Heart left ventricle (tissue), 16 donors: ENCODE measurements at regions of chr5 and their contacts with region 1.

Region 1: DNA sequence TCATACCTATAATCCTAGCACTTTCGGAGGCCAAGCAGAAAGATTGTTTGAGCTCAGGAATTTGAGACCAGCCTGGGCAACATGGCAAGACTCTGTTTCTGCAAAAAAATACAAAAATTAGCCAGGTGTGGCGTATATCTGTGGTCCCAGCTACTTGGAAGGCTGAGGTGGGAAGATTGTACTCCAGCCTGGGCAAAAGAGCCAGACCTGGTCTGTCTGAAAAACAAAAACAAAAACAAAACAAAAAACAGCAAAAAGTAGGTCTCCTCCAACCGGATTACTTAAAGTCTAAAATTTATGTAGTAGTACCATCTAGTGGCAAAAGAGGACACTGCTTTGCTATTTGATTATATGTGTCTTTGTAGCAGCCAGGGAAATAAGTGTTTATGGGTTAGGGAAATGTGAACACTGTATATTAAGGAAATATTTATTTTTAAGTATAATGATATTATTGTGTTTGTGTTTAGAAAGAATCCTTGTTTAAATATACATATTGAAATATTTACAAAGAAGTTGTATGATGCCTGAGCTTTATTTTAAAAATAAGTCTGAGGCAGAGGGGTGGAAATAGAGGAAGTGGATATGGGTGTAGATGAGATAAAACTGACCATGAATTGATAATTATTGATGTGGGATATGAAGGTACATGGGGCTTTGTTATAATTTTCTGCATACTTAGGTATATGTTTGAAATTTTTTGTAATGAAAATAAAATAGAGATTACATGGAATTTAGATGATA is 20.0 kb downstream of the APC start:
- DNase-seq: no peak
- ATAC-seq: peak; percentile 55 to 85 (median 78)
- H3K4me3 ChIP-seq: peak overlapping the region in 2 of 12 donors; percentile 20 to 23
- H3K27ac ChIP-seq: peak overlapping the region in 3 of 12 donors; percentile 14 to 30 (median 30)
- H3K4me1 ChIP-seq: peaks cover 0 to 17% (median 6%) of the 10 kb centered on the region in 12 donors
- H3K27me3 ChIP-seq: no peaks in the 10 kb centered on the region
- CTCF ChIP-seq: peak; percentile 56 to 90 (median 82)
- POLR2A ChIP-seq: no peak

Region 2: DNA sequence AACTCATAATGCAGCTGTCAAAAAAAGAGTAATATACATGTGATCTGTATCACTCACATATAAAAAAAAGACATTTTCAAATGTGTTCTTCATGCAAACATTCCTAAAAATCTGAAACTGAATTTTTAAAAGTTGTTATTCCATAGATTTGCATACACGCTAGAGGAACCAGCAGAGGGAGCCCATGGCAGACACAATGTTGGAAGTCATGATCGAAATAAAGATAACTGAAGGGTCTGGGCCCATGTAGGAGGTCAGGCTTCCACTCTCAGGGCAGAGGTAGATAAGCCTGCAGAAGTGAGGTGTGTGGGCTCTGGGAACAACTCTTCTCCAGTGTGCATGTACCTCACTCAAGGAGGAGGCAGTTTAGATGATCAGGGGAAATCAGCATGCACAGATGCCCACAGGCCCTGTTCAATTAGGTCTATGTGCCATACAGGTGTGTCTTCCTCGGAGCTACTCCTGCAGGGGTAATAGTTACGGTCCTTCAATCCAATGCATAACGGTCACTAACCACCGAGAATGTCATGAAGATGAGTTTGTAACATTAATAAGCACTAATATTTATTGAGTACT is 547.1 kb before region 1 on chr5:
- intact Hi-C with region 1: loop called in 1 of 10 experiments (anchors 10 kb)
- DNase-seq: peak in 4 of 5 donors; percentile 14 to 51 (median 26)
- ATAC-seq: peak in 3 of 4 donors; percentile 48 to 70 (median 68)
- H3K4me3 ChIP-seq: no peak overlapping the region
- H3K27ac ChIP-seq: no peak overlapping the region
- H3K4me1 ChIP-seq: peaks cover 0 to 8% (median 0%) of the 10 kb centered on the region in 12 donors
- H3K27me3 ChIP-seq: no peaks in the 10 kb centered on the region
- CTCF ChIP-seq: peak; percentile 35 to 74 (median 66)
- POLR2A ChIP-seq: no peak

Region 3: GRCh38 chr5:112492291-112492690 is 265.3 kb before region 1 on chr5:
- intact Hi-C with region 1: loop called in 1 of 10 experiments (anchors 5 kb)
- DNase-seq: peak in 3 of 5 donors; percentile 47 to 63 (median 60)
- ATAC-seq: peak in 2 of 4 donors; percentile 87 to 90
- H3K4me3 ChIP-seq: no peak overlapping the region
- H3K27ac ChIP-seq: no peak overlapping the region
- H3K4me1 ChIP-seq: no peaks in the 10 kb centered on the region
- H3K27me3 ChIP-seq: no peaks in the 10 kb centered on the region
- CTCF ChIP-seq: peak; percentile 15 to 79 (median 54)
- POLR2A ChIP-seq: no peak

Region 4: GRCh38 chr5:112691758-112692157 is 65.9 kb before region 1 on chr5:
- intact Hi-C with region 1: loop called in 3 of 10 experiments (anchors 2 to 5 kb)
- DNase-seq: no peak
- ATAC-seq: peak in 1 of 4 donors; percentile 41
- H3K4me3 ChIP-seq: no peak overlapping the region
- H3K27ac ChIP-seq: no peak overlapping the region
- H3K4me1 ChIP-seq: peaks cover 0 to 3% (median 0%) of the 10 kb centered on the region in 12 donors
- H3K27me3 ChIP-seq: no peaks in the 10 kb centered on the region
- CTCF ChIP-seq: peak in 7 of 12 donors; percentile 3 to 48 (median 19)
- POLR2A ChIP-seq: no peak

Region 5: DNA sequence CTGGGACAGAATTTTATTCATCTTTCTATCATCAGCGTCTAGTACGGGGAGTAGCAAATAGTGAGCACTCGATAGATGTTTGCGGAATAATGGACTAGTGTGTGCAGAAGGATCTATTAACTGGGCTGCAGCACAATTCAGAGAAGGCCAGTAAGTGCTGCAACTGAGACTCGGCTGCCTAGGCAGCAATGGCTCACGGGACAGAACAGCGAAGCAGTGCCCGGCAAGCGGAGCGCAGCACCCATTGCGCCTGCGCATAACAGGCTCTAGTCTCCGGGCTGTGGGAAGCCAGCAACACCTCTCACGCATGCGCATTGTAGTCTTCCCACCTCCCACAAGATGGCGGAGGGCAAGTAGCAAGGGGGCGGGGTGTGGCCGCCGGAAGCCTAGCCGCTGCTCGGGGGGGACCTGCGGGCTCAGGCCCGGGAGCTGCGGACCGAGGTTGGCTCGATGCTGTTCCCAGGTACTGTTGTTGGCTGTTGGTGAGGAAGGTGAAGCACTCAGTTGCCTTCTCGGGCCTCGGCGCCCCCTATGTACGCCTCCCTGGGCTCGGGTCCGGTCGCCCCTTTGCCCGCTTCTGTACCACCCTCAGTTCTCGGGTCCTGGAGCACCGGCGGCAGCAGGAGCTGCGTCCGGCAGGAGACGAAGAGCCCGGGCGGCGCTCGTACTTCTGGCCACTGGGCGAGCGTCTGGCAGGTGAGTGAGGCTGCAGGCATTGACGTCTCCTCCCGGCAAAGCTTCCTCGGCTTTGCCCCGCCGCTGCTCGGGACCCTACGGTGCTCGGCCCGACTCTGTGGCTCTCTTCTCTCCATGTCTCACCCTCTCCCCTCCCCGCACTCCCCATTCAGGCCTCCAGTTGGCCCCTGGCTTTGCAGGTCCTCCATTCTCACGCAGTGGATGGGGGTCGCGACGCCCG is 50.2 kb before region 1 on chr5:
- intact Hi-C with region 1: loop called in 1 of 10 experiments (anchors 10 kb)
- DNase-seq: peak; percentile 99 to 100 (median 99)
- ATAC-seq: peak; percentile 96 to 98 (median 98)
- H3K4me3 ChIP-seq: peak overlapping the region; percentile 39 to 98 (median 85)
- H3K27ac ChIP-seq: peak overlapping the region; percentile 62 to 98 (median 94)
- H3K4me1 ChIP-seq: peaks cover 0 to 60% (median 40%) of the 10 kb centered on the region in 12 donors
- H3K27me3 ChIP-seq: no peaks in the 10 kb centered on the region
- CTCF ChIP-seq: no peak
- POLR2A ChIP-seq: peak in 1 of 2 donors; percentile 82